H1 (cell line): ENCODE measurements at regions of chr6 and their contacts with region 1.

Region 1: DNA sequence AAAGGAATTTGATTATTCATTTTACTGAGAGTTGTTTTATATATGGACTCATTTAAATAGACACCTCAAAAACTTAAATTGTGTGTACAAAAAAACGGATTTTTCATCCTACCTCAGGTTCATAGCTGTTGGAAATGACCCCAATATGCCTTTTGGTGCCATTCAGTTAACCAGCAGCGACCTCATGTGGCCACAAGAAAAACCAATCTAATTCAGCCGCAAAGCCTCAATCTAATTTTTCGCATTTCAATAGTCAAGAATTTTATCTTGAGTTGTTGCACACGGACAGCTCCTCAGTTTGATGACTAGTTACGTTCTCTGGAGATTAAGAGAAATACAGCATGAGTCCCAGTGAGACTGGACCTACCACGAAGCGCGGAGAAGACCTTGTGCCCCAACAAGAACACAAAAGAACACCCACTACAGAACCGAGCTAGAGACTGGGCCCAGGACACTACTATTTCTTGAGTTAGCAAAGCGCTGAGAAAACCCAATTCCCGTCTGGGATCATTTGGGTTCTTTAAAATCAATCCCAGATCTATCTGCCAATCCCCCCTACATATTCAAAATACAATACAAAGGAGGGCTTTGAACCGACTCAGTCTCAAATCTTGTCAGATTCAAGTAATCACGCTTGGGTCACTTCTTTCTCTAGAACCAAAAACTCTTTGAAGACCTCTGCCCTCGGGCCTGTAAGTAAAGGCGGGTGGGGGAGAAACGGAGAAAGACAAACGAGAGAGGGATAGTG is 1.1 kb downstream of the TCP11 start:
- DNase-seq: peak in 1 of 2 experiments; percentile 54
- H3K4me3 ChIP-seq: no peak overlapping the region
- H3K27ac ChIP-seq: no peak overlapping the region
- H3K4me1 ChIP-seq: peaks cover 0 to 3% (median under 1%) of the 10 kb centered on the region in 4 experiments; a peak in 1 of 7 replicates
- H3K27me3 ChIP-seq: peaks cover 0 to 12% (median 12%) of the 10 kb centered on the region in 4 experiments; a peak in 5 of 7 replicates
- CTCF ChIP-seq: peak in 2 of 3 experiments; percentile 81 to 82; a peak in 3 of 4 replicates
- EP300 ChIP-seq: no peak
- POLR2A ChIP-seq: no peak
- RAD21 ChIP-seq: peak; percentile 97 to 98

Region 2: DNA sequence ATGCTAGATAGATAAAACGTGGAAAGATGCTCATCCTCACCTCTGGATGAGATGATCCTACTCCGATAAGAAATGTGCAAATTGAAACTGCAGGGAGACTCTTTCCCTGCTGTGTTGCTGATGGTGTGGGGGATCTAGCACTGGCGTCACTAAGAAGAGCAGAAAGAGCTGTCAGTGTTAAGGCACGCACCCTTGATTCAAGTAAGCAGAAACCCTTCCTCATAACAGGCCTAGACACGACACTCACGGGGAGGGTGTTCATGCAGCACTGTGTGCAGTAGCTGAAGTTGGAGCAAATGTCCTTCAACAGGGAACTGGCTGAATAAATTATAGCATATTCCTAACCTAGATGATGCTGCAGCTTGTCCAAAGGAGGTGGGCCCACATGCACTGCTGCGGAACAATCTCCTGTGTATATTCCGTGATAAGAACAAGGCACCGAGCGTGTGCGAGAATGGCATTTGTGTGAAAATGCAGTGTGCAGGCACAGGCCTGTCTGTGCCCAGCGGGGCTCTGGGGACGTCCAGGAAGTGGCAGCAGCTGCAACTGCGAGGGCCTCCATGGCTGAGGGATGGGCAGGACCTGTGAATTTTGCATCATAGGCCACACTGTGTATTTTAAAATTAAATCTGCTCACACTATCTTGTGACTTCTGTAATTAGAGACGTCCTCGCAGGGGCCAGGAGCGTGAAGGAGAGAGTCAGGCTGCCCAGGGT is 62.9 kb before region 1 on chr6:
- CTCF ChIA-PET with region 1: interaction called, 17 read pairs
- POLR2A ChIA-PET with region 1: no interaction called
- DNase-seq: no peak
- H3K4me3 ChIP-seq: no peak overlapping the region
- H3K27ac ChIP-seq: no peak overlapping the region
- H3K4me1 ChIP-seq: peaks cover 0 to 9% (median 4%) of the 10 kb centered on the region in 4 experiments; a peak in 5 of 7 replicates
- H3K27me3 ChIP-seq: no peaks in the 10 kb centered on the region
- CTCF ChIP-seq: no peak
- EP300 ChIP-seq: no peak
- POLR2A ChIP-seq: no peak
- RAD21 ChIP-seq: no peak

Region 3: DNA sequence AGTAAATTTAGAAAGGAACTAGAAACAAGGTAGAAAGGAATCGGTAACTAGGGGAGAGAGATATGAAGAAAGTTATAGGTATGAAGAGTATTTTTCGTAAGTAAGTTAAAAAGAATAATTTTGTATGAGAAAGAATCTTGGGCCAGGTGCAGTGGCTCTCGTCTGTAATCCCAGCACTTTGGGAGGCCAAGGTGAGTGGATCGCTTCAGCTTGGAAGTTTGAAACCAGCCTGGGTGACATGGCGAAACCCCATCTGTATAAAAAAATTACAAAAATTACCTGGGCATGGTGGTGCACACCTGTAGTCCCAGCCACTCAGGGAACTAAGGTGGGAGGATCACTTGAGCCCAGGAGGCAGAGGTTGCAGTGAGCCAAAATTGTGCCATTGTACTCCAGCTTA is 41.0 kb before region 1 on chr6:
- CTCF ChIA-PET with region 1: interaction called, 12 read pairs
- POLR2A ChIA-PET with region 1: no interaction called
- DNase-seq: no peak
- H3K4me3 ChIP-seq: no peak overlapping the region
- H3K27ac ChIP-seq: no peak overlapping the region
- H3K4me1 ChIP-seq: peaks cover 0 to 6% (median 3%) of the 10 kb centered on the region in 4 experiments; a peak in 3 of 7 replicates
- H3K27me3 ChIP-seq: no peaks in the 10 kb centered on the region
- CTCF ChIP-seq: no peak
- EP300 ChIP-seq: no peak
- POLR2A ChIP-seq: no peak
- RAD21 ChIP-seq: no peak

Region 4: GRCh38 chr6:35128496-35128895 is 11.6 kb before region 1 on chr6:
- CTCF ChIA-PET with region 1: interaction called, 36 read pairs
- POLR2A ChIA-PET with region 1: no interaction called
- DNase-seq: no peak
- H3K4me3 ChIP-seq: no peak overlapping the region
- H3K27ac ChIP-seq: no peak overlapping the region
- H3K4me1 ChIP-seq: no peaks in the 10 kb centered on the region
- H3K27me3 ChIP-seq: no peaks in the 10 kb centered on the region
- CTCF ChIP-seq: no peak
- EP300 ChIP-seq: no peak
- POLR2A ChIP-seq: no peak
- RAD21 ChIP-seq: no peak

Region 5: DNA sequence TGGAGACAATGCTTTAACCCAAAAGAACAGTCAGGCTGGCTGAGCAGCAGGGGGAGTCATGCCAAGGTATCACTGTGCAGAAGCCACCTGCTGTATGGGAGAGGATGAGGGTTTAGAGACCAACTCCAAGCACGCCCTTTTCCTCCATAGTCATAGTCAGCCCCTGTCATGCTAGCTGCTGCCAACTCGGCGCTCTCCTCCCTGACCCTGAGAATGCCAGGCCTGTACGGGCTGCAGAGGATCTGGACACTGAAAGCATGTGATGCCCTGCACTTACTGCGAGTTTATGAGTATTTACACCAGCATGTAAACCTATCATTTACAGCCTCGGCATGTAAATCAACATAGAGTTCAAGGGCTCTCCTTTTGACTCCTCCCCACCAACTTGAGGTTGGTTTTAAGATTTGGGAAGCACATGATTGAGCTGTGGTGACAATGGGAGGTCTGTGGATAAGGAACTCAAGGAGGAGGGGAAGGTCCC is 62.0 kb after region 1 on chr6:
- CTCF ChIA-PET with region 1: interaction called, 51 read pairs
- POLR2A ChIA-PET with region 1: no interaction called
- DNase-seq: no peak
- H3K4me3 ChIP-seq: no peak overlapping the region
- H3K27ac ChIP-seq: no peak overlapping the region
- H3K4me1 ChIP-seq: peaks cover 0 to 7% (median 5%) of the 10 kb centered on the region in 4 experiments; a peak in 4 of 7 replicates
- H3K27me3 ChIP-seq: peaks cover 3 to 11% (median 6%) of the 10 kb centered on the region in 4 experiments; a peak in 5 of 7 replicates
- CTCF ChIP-seq: peak in 1 of 3 experiments; percentile 36; a peak in 1 of 4 replicates
- EP300 ChIP-seq: no peak
- POLR2A ChIP-seq: no peak
- RAD21 ChIP-seq: peak in 1 of 2 experiments; percentile 24; a peak in 1 of 4 replicates